Caco-2 (cell line): ENCODE measurements at regions of chr17 and their contacts with region 1.

Region 1: GRCh38 chr17:34361478-34362061 is 1.5 kb downstream of the CCL1 start:
- DNase-seq: peak; percentile 93
- H3K4me3 ChIP-seq: no peak overlapping the region
- H3K4me3 Mint-ChIP-seq: no peak overlapping the region
- H3K27ac Mint-ChIP-seq: no peak overlapping the region
- H3K4me1 ChIP-seq: peaks cover 11% of the 10 kb centered on the region; the same call in 1 of the 2 replicates
- H3K4me1 Mint-ChIP-seq: peaks cover 5% of the 10 kb centered on the region
- H3K27me3 ChIP-seq: no peaks in the 10 kb centered on the region
- H3K27me3 Mint-ChIP-seq: peaks cover 11% of the 10 kb centered on the region
- CTCF ChIP-seq: peak; percentile 98 to 99

Region 2: DNA sequence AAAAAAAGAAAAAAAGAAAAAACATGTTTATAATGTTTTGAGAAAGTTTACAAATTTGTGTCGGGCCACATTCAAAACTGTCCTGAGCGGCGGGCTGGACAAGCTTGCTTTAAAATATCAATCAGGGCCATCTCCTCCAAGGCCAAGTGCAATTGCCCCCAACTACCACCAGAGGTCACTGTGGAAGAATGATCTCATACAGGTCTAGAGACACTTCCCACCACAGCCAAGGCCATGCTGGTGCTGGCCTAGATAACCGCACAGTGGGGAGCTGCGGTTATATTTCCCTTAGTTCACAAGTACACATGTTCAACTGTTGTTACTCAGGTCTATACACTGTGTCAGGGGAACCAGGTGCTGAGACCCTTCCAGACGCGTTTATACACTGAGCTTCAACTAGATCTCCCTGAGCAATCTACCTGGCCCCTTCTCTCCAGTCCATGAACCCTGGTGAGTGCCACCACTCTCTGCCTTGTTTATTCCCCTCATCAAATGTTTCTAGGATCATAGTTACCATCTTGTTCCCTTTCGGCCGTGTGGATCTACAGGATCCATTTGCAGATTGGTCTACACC is 190.2 kb before region 1 on chr17:
- CTCF ChIA-PET with region 1: interaction called, 21 read pairs
- POLR2A ChIA-PET with region 1: no interaction called
- intact Hi-C with region 1: loop called (anchors 1 kb)
- DNase-seq: peak; percentile 59 to 72
- H3K4me3 ChIP-seq: no peak overlapping the region
- H3K4me3 Mint-ChIP-seq: no peak overlapping the region
- H3K27ac Mint-ChIP-seq: no peak overlapping the region
- H3K4me1 ChIP-seq: no peaks in the 10 kb centered on the region
- H3K4me1 Mint-ChIP-seq: no peaks in the 10 kb centered on the region
- H3K27me3 ChIP-seq: no peaks in the 10 kb centered on the region
- H3K27me3 Mint-ChIP-seq: peaks cover 16% of the 10 kb centered on the region
- CTCF ChIP-seq: peak; percentile 81 to 95

Region 3: DNA sequence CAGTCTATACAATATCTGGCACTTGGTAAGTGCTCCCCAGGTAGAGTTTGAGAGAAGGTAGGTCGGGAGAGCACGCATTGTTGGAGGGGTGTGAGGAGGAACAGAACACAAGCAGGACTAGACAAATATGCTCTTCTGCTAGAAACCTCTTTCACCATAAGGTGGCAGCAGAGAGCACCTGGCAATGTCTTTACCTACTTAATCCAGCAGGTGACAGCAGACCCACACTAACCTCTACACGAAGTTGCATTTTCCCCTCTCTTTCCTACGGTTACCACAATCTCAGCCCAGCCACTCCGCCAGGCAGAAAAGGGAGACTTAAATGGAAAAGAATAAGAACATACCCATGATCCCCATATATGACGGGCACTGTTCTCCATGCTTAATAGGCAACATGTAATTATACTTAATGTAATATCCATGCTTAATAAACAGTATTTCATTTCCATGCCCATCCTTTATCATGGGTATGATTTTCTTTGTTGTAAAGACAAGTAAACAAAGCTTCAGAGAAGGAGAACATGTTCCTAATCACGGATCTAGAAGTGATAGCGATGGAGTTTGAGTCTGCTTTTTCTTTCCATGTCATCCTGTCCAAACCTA is 161.5 kb before region 1 on chr17:
- CTCF ChIA-PET with region 1: interaction called, 118 read pairs
- POLR2A ChIA-PET with region 1: no interaction called
- intact Hi-C with region 1: loop called (anchors 1 kb)
- DNase-seq: peak; percentile 73 to 82
- H3K4me3 ChIP-seq: no peak overlapping the region
- H3K4me3 Mint-ChIP-seq: no peak overlapping the region
- H3K27ac Mint-ChIP-seq: no peak overlapping the region
- H3K4me1 ChIP-seq: no peaks in the 10 kb centered on the region
- H3K4me1 Mint-ChIP-seq: no peaks in the 10 kb centered on the region
- H3K27me3 ChIP-seq: no peaks in the 10 kb centered on the region; the same call in 1 of the 2 replicates
- H3K27me3 Mint-ChIP-seq: peaks cover 13% of the 10 kb centered on the region
- CTCF ChIP-seq: peak; percentile 100

Region 4: GRCh38 chr17:34306466-34306865 is 55.1 kb before region 1 on chr17:
- CTCF ChIA-PET with region 1: interaction called, 14 read pairs
- POLR2A ChIA-PET with region 1: no interaction called
- intact Hi-C with region 1: no loop called
- DNase-seq: peak in 1 of 2 experiments; percentile 5
- H3K4me3 ChIP-seq: no peak overlapping the region
- H3K4me3 Mint-ChIP-seq: no peak overlapping the region
- H3K27ac Mint-ChIP-seq: no peak overlapping the region
- H3K4me1 ChIP-seq: no peaks in the 10 kb centered on the region
- H3K4me1 Mint-ChIP-seq: no peaks in the 10 kb centered on the region
- H3K27me3 ChIP-seq: no peaks in the 10 kb centered on the region; the same call in none of the 2 replicates
- H3K27me3 Mint-ChIP-seq: no peaks in the 10 kb centered on the region
- CTCF ChIP-seq: peak in 1 of 2 experiments; percentile 2

Region 5: GRCh38 chr17:34318474-34318873 is 43.1 kb before region 1 on chr17:
- CTCF ChIA-PET with region 1: interaction called, 13 read pairs
- POLR2A ChIA-PET with region 1: no interaction called
- intact Hi-C with region 1: loop called (anchors 5 kb)
- DNase-seq: peak; percentile 43 to 54
- H3K4me3 ChIP-seq: no peak overlapping the region
- H3K4me3 Mint-ChIP-seq: no peak overlapping the region
- H3K27ac Mint-ChIP-seq: no peak overlapping the region
- H3K4me1 ChIP-seq: no peaks in the 10 kb centered on the region
- H3K4me1 Mint-ChIP-seq: no peaks in the 10 kb centered on the region
- H3K27me3 ChIP-seq: no peaks in the 10 kb centered on the region
- H3K27me3 Mint-ChIP-seq: peaks cover 6% of the 10 kb centered on the region
- CTCF ChIP-seq: peak in 1 of 2 experiments; percentile 31

Region 6: GRCh38 chr17:34347063-34347462 is 14.5 kb before region 1 on chr17:
- CTCF ChIA-PET with region 1: no interaction called
- POLR2A ChIA-PET with region 1: no interaction called
- intact Hi-C with region 1: no loop called
- DNase-seq: no peak
- H3K4me3 ChIP-seq: no peak overlapping the region
- H3K4me3 Mint-ChIP-seq: no peak overlapping the region
- H3K27ac Mint-ChIP-seq: no peak overlapping the region
- H3K4me1 ChIP-seq: peaks cover 5% of the 10 kb centered on the region; the same call in 1 of the 2 replicates
- H3K4me1 Mint-ChIP-seq: no peaks in the 10 kb centered on the region
- H3K27me3 ChIP-seq: no peaks in the 10 kb centered on the region
- H3K27me3 Mint-ChIP-seq: peaks cover 4% of the 10 kb centered on the region
- CTCF ChIP-seq: no peak

Region 7: DNA sequence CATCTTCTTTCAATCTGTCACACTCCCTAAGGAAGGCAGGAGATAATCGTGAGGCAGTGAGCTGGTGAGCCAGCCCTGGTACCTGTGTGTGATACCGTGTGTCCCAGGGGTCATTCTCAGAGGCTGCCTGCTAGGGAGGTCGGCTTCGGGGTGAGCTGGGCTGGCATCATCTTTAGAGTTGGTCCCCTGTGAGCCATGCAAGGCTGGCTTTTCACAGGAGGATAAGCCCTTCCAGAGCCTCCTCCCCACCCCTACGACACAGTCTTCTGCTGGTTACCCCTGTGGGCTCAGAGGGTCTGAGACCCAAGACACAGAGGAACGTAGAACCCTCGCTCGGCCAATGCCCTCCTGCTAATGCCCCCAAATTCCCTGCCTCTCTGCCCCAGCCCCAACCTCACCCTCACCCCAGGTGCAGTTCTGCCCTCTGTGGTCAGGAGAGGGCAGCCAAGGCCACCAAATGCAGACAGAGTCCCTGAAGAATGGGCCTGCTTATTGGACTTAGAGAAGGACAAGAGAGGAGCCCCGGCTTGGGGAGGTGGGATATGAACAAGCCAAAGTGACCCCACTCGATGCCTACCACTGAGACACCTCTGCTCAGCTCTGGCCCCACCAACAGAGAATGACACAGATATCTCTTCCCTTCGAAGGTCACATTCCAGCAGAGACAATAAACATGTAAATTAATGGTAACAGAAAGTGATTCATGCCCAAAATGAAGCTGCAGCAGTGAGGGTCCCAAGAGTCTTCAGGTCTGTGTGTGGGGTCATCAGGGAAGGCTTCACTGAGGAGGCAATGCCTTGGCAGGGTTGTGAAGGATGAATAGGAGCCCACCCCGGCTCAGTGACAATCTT is 82.3 kb after region 1 on chr17:
- CTCF ChIA-PET with region 1: no interaction called
- POLR2A ChIA-PET with region 1: no interaction called
- intact Hi-C with region 1: no loop called
- DNase-seq: peak; percentile 48 to 55
- H3K4me3 ChIP-seq: no peak overlapping the region
- H3K4me3 Mint-ChIP-seq: no peak overlapping the region
- H3K27ac Mint-ChIP-seq: no peak overlapping the region
- H3K4me1 ChIP-seq: no peaks in the 10 kb centered on the region
- H3K4me1 Mint-ChIP-seq: no peaks in the 10 kb centered on the region
- H3K27me3 ChIP-seq: no peaks in the 10 kb centered on the region; the same call in 1 of the 2 replicates
- H3K27me3 Mint-ChIP-seq: peaks cover 24% of the 10 kb centered on the region
- CTCF ChIP-seq: peak in 1 of 2 experiments; percentile 58

Region 8: GRCh38 chr17:34556384-34556783 is 194.8 kb after region 1 on chr17:
- CTCF ChIA-PET with region 1: no interaction called
- POLR2A ChIA-PET with region 1: no interaction called
- intact Hi-C with region 1: no loop called
- DNase-seq: peak in 1 of 2 experiments; percentile 64
- H3K4me3 ChIP-seq: no peak overlapping the region
- H3K4me3 Mint-ChIP-seq: no peak overlapping the region
- H3K27ac Mint-ChIP-seq: no peak overlapping the region
- H3K4me1 ChIP-seq: no peaks in the 10 kb centered on the region
- H3K4me1 Mint-ChIP-seq: no peaks in the 10 kb centered on the region
- H3K27me3 ChIP-seq: no peaks in the 10 kb centered on the region
- H3K27me3 Mint-ChIP-seq: peaks cover 17% of the 10 kb centered on the region
- CTCF ChIP-seq: no peak

Region 9: GRCh38 chr17:34571428-34572130 is 210.0 kb after region 1 on chr17:
- CTCF ChIA-PET with region 1: no interaction called
- POLR2A ChIA-PET with region 1: no interaction called
- intact Hi-C with region 1: no loop called
- DNase-seq: no peak
- H3K4me3 ChIP-seq: no peak overlapping the region
- H3K4me3 Mint-ChIP-seq: no peak overlapping the region
- H3K27ac Mint-ChIP-seq: no peak overlapping the region
- H3K4me1 ChIP-seq: no peaks in the 10 kb centered on the region
- H3K4me1 Mint-ChIP-seq: no peaks in the 10 kb centered on the region
- H3K27me3 ChIP-seq: peaks cover 2% of the 10 kb centered on the region
- H3K27me3 Mint-ChIP-seq: peaks cover 22% of the 10 kb centered on the region
- CTCF ChIP-seq: no peak